H1 (cell line): ENCODE measurements at regions of chr11 and their contacts with region 1.

Region 1: GRCh38 chr11:64078284-64078683 is 42.6 kb downstream of the FLRT1 start:
- DNase-seq: no peak
- H3K4me3 ChIP-seq: no peak overlapping the region
- H3K27ac ChIP-seq: no peak overlapping the region
- H3K4me1 ChIP-seq: no peaks in the 10 kb centered on the region
- H3K27me3 ChIP-seq: peaks cover 0 to 88% (median 64%) of the 10 kb centered on the region in 4 experiments; a peak in 6 of 7 replicates
- CTCF ChIP-seq: no peak
- EP300 ChIP-seq: no peak
- POLR2A ChIP-seq: no peak
- RAD21 ChIP-seq: no peak

Region 2: DNA sequence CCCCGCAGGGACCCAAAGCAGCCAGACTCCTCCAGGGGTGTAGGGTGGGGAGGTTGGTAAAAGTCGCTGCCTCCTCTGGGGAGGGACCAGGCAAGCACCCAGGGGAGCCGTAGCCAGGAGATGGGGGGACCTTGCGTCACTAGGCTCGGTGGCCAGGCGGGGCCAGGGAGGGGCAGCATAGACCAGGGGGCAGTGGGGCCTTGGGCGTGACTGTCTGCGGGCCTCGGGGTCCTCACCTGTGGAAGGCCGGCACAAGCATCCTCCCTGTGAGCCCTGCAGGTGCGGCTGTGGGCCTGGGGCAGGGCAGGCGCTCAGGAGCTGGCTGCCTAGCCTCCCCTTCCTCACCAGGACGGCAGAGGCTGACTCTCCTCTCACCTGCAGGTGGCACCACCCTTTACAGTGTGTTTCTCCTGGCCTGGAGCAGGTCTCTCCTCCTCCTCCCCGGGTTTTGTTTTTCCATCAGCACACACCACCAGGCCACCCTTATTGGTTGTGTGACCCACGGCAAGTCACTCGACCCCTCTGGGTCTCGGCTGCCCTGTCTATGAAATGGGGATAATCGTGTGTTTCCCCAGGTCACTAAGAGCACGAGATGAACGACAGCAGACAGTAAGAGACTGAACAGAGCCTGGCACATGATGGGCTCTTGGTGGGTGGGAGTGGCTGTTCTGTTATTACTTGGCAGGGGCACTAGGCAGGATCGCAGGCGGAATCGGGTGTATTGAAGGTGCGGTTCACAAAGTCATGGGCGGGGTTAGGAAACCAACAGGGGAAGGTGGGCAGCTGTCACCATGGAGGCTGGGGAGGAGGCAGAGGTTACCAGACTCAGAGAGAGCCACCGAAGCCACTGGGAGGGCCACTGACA is 10.1 kb after region 1 on chr11:
- CTCF ChIA-PET with region 1: interaction called, 10 read pairs
- POLR2A ChIA-PET with region 1: interaction called, 3 read pairs
- DNase-seq: peak; percentile 38 to 72
- H3K4me3 ChIP-seq: no peak overlapping the region
- H3K27ac ChIP-seq: no peak overlapping the region
- H3K4me1 ChIP-seq: peaks cover 0 to 8% (median 5%) of the 10 kb centered on the region in 4 experiments; a peak in 6 of 7 replicates
- H3K27me3 ChIP-seq: peaks cover 2 to 60% (median 31%) of the 10 kb centered on the region in 4 experiments
- CTCF ChIP-seq: peak in 2 of 3 experiments; percentile 82 to 85; a peak in 3 of 4 replicates
- EP300 ChIP-seq: no peak
- POLR2A ChIP-seq: no peak
- RAD21 ChIP-seq: peak; percentile 63 to 70